PC-3 (cell line): ENCODE measurements at regions of chr6 and their contacts with region 1.

Region 1: GRCh38 chr6:85923013-85923430 is 280.3 kb upstream of the SYNCRIP start:
- DNase-seq: peak; percentile 72
- ATAC-seq: peak; percentile 98
- H3K4me3 ChIP-seq: no peak overlapping the region
- H3K27ac ChIP-seq: no peak overlapping the region
- H3K4me1 ChIP-seq: no peaks in the 10 kb centered on the region
- H3K27me3 ChIP-seq: no peaks in the 10 kb centered on the region
- CTCF ChIP-seq: peak; percentile 74

Region 2: DNA sequence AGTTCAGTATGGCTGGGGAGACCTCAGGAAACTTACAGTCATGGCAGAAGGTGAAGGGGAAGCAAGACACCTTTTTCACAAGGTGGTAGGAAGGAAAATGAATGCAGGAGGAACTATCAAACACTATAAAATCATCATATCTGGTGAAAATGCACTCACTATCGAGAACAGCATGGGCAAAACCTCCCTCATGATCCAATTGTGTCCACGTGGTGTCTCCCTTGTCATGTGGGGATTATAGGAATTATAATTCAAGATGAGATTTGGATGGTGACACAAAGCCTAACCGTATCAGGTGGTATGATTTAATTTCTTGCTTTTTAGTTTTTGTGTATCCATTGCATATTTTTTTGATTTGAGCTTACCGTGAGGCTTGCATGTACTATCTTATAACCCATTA is 147.1 kb before region 1 on chr6:
- CTCF ChIA-PET with region 1: no interaction called
- POLR2A ChIA-PET with region 1: no interaction called
- intact Hi-C with region 1: loop called (anchors 5 kb)
- DNase-seq: peak; percentile 49
- ATAC-seq: peak; percentile 69
- H3K4me3 ChIP-seq: no peak overlapping the region
- H3K27ac ChIP-seq: no peak overlapping the region
- H3K4me1 ChIP-seq: no peaks in the 10 kb centered on the region
- H3K27me3 ChIP-seq: no peaks in the 10 kb centered on the region
- CTCF ChIP-seq: peak; percentile 51

Region 3: GRCh38 chr6:85961746-85962145 is 38.7 kb after region 1 on chr6:
- CTCF ChIA-PET with region 1: no interaction called
- POLR2A ChIA-PET with region 1: no interaction called
- intact Hi-C with region 1: no loop called
- DNase-seq: no peak
- ATAC-seq: no peak
- H3K4me3 ChIP-seq: no peak overlapping the region
- H3K27ac ChIP-seq: no peak overlapping the region
- H3K4me1 ChIP-seq: no peaks in the 10 kb centered on the region
- H3K27me3 ChIP-seq: no peaks in the 10 kb centered on the region
- CTCF ChIP-seq: no peak

Region 4: DNA sequence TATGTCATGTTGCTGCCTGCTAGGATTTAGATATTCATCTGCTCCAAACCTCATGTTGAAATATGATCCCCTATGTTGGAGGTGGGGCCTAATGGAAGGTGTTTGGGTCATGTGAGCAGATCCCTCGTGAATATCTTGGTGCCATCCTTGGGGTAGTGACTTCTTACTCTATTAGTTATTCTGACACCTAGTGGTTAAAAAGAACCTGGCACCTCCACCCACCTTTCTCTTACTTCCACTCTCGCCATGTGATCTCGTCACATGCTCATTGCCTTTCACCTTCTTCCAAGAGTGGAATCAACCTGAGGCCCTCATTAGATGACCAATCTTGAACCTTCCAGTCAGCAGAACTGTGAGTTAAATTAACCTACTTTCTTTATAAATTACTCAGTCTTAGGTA is 269.1 kb after region 1 on chr6:
- CTCF ChIA-PET with region 1: no interaction called
- POLR2A ChIA-PET with region 1: no interaction called
- intact Hi-C with region 1: loop called (anchors 1 kb)
- DNase-seq: peak; percentile 42
- ATAC-seq: peak; percentile 63; the same call in 1 of the 2 replicates
- H3K4me3 ChIP-seq: no peak overlapping the region
- H3K27ac ChIP-seq: no peak overlapping the region
- H3K4me1 ChIP-seq: no peaks in the 10 kb centered on the region
- H3K27me3 ChIP-seq: no peaks in the 10 kb centered on the region
- CTCF ChIP-seq: peak; percentile 58

Region 5: DNA sequence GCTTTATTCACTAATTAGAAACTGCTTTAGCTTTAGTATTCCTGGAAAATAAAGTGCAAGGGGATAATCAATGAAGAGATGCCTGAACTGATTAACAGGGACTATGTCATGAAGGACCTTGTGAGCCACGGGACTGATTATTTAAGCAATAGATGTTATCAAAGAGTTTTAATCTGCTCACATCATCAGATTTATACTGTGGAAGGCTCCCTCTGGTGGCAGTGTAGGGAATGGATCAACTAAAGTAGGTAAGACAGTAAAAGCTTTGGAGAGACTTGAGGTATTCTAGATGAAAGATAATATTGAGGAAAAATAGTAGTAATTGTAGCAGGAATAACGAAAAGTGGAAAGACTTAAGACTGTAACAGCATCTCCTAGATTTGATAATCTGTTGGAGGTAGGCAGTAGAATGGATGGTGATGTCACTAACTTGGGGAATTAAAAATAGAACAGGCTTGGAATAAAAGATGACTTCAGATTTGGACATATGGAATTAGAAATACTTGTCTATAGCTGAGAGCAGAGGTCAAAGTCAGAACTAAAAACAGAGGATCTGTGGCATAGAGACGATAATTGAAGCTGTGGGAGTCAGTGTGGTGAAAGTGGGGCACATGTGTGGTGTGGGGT is 934.0 kb after region 1 on chr6:
- CTCF ChIA-PET with region 1: no interaction called
- POLR2A ChIA-PET with region 1: no interaction called
- intact Hi-C with region 1: loop called (anchors 2 kb)
- DNase-seq: peak; percentile 58
- ATAC-seq: no peak
- H3K4me3 ChIP-seq: no peak overlapping the region
- H3K27ac ChIP-seq: no peak overlapping the region
- H3K4me1 ChIP-seq: no peaks in the 10 kb centered on the region
- H3K27me3 ChIP-seq: no peaks in the 10 kb centered on the region
- CTCF ChIP-seq: peak; percentile 73

Region 6: DNA sequence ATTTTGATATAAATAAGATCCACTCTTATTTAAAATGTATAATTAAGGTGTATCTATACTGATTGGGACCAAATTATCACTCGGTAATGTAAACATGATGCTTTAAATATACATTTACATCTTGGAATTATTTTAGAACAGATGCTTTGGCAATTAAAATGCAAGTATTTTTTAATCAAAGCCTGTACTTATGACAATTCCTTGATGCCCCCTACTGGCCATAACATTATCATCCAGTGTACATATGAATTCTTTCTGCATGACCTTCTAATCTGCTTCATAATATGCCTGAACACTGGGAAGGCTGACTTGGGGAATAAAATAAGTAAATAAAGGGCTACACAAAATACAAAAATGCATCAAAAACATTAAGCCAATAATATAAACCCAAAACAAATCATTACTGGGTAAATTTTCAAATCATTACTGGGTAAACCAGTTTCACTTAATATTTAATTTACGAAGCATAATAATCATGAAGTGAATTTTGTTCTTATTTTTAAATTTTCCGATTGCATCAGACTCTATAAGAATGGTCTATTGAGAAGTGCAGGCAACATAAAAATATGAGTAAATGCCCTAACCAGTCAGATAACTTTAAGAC is 1106.8 kb after region 1 on chr6:
- CTCF ChIA-PET with region 1: no interaction called
- POLR2A ChIA-PET with region 1: no interaction called
- intact Hi-C with region 1: loop called (anchors 5 kb)
- DNase-seq: peak; percentile 53
- ATAC-seq: peak; percentile 63
- H3K4me3 ChIP-seq: no peak overlapping the region
- H3K27ac ChIP-seq: no peak overlapping the region
- H3K4me1 ChIP-seq: no peaks in the 10 kb centered on the region
- H3K27me3 ChIP-seq: no peaks in the 10 kb centered on the region
- CTCF ChIP-seq: peak; percentile 71